Activated CD4-positive, alpha-beta T cell treated with anti-CD3 and anti-CD28 coated beads for 36 hours (primary cell): ENCODE measurements at regions of chrX and their contacts with region 1.

Region 1: GRCh38 chrX:14883826-14884225 is 10.6 kb downstream of the MOSPD2 start:
- DNase-seq: no peak
- ATAC-seq: peak; percentile 57
- H3K4me3 Mint-ChIP-seq: peak overlapping the region; percentile 35
- H3K27ac Mint-ChIP-seq: peak overlapping the region; percentile 93
- H3K4me1 Mint-ChIP-seq: peaks cover 48% of the 10 kb centered on the region
- H3K27me3 Mint-ChIP-seq: no peaks in the 10 kb centered on the region

Region 2: GRCh38 chrX:15059474-15059873 is 175.6 kb after region 1 on chrX:
- CTCF ChIA-PET with region 1: no interaction called
- POLR2A ChIA-PET with region 1: no interaction called
- intact Hi-C with region 1: no loop called
- DNase-seq: no peak
- ATAC-seq: no peak
- H3K4me3 Mint-ChIP-seq: no peak overlapping the region
- H3K27ac Mint-ChIP-seq: no peak overlapping the region
- H3K4me1 Mint-ChIP-seq: no peaks in the 10 kb centered on the region
- H3K27me3 Mint-ChIP-seq: peaks cover 3% of the 10 kb centered on the region

Region 3: DNA sequence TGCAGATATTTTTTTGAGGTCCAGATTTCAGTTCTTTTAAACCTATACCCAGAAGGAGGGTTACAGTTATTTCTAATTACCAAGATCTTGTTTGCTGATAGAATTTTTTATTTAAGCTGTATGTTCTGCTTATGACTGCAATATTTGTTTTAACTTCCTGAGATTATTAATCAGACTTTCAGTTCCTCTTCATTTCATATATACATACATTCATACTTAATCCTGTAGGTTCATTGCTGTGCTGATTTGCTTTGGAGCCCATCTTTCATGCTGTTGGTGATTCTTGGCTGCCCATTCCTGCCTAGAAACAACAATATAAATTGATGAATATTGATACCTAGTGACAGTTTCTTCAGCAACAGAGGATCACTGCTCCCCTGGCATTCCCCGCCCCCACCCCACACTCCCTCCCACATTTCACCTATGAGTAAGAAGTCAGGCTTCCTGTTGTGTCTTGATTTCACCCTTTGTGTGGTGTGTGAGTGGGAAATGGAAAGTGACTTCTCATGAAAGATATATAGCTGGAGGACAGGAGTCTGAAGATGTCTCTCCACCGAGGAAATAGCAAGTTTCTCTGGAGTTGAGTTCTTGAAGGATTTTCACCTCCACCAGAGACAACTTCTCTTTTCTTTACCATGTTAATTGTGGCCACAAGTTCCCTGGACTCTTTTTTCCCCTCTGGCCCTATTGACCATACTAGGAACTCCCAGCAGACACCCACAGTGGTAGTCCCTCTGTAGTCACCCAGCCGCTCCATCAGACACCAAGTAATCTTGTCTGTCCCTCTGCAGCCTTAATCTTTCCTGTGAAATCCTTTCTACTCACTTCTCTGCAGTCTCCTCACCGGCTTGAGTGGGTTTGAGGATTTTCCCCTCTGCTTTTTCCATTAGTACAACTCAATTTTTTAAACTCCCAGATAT is 267.7 kb after region 1 on chrX:
- CTCF ChIA-PET with region 1: no interaction called
- POLR2A ChIA-PET with region 1: no interaction called
- intact Hi-C with region 1: loop called (anchors 5 to 10 kb)
- DNase-seq: peak; percentile 56
- ATAC-seq: peak; percentile 92
- H3K4me3 Mint-ChIP-seq: no peak overlapping the region
- H3K27ac Mint-ChIP-seq: peak overlapping the region; percentile 70
- H3K4me1 Mint-ChIP-seq: peaks cover 16% of the 10 kb centered on the region
- H3K27me3 Mint-ChIP-seq: peaks cover 14% of the 10 kb centered on the region